ENCODE measurements at regions of chrX and their contacts with region 1.

Region 1: GRCh38 chrX:47836164-47837072 is at the start of gene ZNF81:
- DNase-seq: peak; percentile 76
- ATAC-seq: peak; percentile 95
- H3K4me3 Mint-ChIP-seq: peak within 1 kb of the TSS; percentile 93
- H3K27ac Mint-ChIP-seq: peak within 1 kb of the TSS; percentile 93
- H3K4me1 Mint-ChIP-seq: peaks cover 21% of the 10 kb centered on the region
- H3K27me3 Mint-ChIP-seq: no peaks in the 10 kb centered on the region
- CTCF ChIP-seq: no peak
- total RNA-seq, gene ZNF81: 11.0 and 15.3 TPM in 2 replicates

Region 2: GRCh38 chrX:47815901-47816845 is 20.2 kb before region 1 on chrX:
- CTCF ChIA-PET with region 1: no interaction called
- POLR2A ChIA-PET with region 1: no interaction called
- intact Hi-C with region 1: no loop called
- DNase-seq: no peak
- ATAC-seq: no peak
- H3K4me3 Mint-ChIP-seq: no peak overlapping the region
- H3K27ac Mint-ChIP-seq: no peak overlapping the region
- H3K4me1 Mint-ChIP-seq: no peaks in the 10 kb centered on the region
- H3K27me3 Mint-ChIP-seq: no peaks in the 10 kb centered on the region
- CTCF ChIP-seq: no peak

Region 3: GRCh38 chrX:47958761-47959342 is 122.4 kb after region 1 on chrX:
- CTCF ChIA-PET with region 1: no interaction called
- POLR2A ChIA-PET with region 1: no interaction called
- intact Hi-C with region 1: no loop called
- DNase-seq: no peak
- ATAC-seq: peak; percentile 52
- H3K4me3 Mint-ChIP-seq: no peak overlapping the region
- H3K27ac Mint-ChIP-seq: no peak overlapping the region
- H3K4me1 Mint-ChIP-seq: peaks cover 18% of the 10 kb centered on the region
- H3K27me3 Mint-ChIP-seq: no peaks in the 10 kb centered on the region
- CTCF ChIP-seq: no peak

Region 4: GRCh38 chrX:48468693-48469691 is 632.6 kb after region 1 on chrX:
- CTCF ChIA-PET with region 1: no interaction called
- POLR2A ChIA-PET with region 1: interaction called, 3 read pairs
- intact Hi-C with region 1: loop called (anchors 5 kb)
- DNase-seq: no peak
- ATAC-seq: peak; percentile 52
- H3K4me3 Mint-ChIP-seq: peak overlapping the region; percentile 91
- H3K27ac Mint-ChIP-seq: peak overlapping the region; percentile 69
- H3K4me1 Mint-ChIP-seq: peaks cover 12% of the 10 kb centered on the region
- H3K27me3 Mint-ChIP-seq: no peaks in the 10 kb centered on the region
- CTCF ChIP-seq: no peak

Region 5: GRCh38 chrX:49111791-49112190 is 1275.4 kb after region 1 on chrX:
- CTCF ChIA-PET with region 1: no interaction called
- POLR2A ChIA-PET with region 1: no interaction called
- intact Hi-C with region 1: no loop called
- DNase-seq: no peak
- ATAC-seq: no peak
- H3K4me3 Mint-ChIP-seq: no peak overlapping the region
- H3K27ac Mint-ChIP-seq: no peak overlapping the region
- H3K4me1 Mint-ChIP-seq: no peaks in the 10 kb centered on the region
- H3K27me3 Mint-ChIP-seq: no peaks in the 10 kb centered on the region
- CTCF ChIP-seq: no peak